ENCODE measurements at regions of chr16 and their contacts with region 1.

Region 1: GRCh38 chr16:19521471-19522396 is at the start of gene GDE1:
- DNase-seq: peak; percentile 96 to 97
- H3K4me3 ChIP-seq: peak within 1 kb of the TSS; percentile 52 to 92 (median 92)
- H3K27ac ChIP-seq: peak within 1 kb of the TSS; percentile 64 to 82 (median 80)
- H3K4me1 ChIP-seq: peaks cover 30 to 36% of the 10 kb centered on the region in 2 donors
- H3K27me3 ChIP-seq: no peaks in the 10 kb centered on the region
- CTCF ChIP-seq: peak in 3 of 6 experiments; percentile 29 to 31 (median 30)
- POLR2A ChIP-seq: peak in 1 of 2 donors; percentile 96
- total RNA-seq, gene GDE1: 57.3 to 80.9 (median 68.8) TPM

Region 2: DNA sequence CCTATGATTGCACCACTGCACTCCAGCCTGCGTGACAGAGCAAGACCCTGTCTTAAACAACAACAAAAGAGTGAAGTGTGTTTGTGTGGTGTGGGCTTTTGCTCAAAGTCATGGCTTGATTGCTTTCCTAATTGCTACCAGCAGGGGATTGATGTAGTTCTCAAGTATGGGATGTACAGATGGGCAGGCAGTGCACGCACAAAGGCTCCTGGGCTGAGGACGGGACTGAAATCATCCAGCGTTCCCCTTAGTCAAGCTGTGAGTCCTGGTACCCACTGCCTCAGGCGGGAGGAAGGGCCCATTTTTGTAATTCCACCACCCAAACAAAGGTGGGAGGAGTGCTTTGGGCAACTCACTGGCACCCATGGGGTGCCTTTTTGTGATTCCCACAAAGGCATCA is 47.1 kb before region 1 on chr16:
- intact Hi-C with region 1: no loop called
- DNase-seq: no peak
- H3K4me3 ChIP-seq: no peak overlapping the region
- H3K27ac ChIP-seq: no peak overlapping the region
- H3K4me1 ChIP-seq: peaks cover 0 to 5% of the 10 kb centered on the region in 2 donors
- H3K27me3 ChIP-seq: no peaks in the 10 kb centered on the region
- CTCF ChIP-seq: no peak
- POLR2A ChIP-seq: no peak

Region 3: DNA sequence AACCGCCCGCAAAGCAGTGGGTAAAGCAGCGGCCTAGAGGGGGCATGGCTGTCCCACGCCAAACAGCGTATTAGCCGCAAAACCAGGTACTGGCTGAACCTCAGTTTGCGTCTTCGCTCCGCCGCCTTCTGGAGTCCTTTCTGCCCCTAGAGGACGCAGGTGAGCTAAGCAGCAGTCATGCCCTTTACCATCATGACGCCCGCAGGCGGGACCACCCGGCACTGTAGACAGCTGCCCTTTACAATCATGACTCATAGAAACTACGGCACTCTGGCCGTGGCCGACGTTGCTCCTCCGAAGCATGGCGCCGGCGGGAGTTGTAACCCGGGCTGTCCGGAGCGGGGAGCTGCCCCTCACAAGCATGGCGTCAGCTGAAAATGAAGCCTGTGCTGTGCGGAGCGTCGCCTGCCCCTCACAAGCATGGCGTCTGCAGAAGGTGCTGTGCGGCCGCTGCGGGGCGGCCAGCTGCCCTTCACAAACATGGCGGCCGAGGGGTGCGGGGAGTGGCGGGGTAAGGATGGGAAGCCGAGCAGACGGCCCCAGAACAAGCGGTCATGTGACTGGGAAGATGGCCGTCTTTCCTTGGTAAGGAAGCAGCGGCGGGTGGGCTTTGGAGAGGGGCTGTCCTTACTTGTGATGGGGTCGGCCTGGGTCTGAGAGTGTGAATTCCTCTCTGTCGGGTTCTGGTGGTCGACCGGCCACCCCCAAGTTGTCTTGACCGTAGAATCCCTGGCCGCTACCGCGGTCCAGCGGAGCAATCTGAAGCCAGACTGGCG is 33.6 kb after region 1 on chr16 and contains the start of gene VPS35L:
- intact Hi-C with region 1: loop called (anchors 5 kb)
- DNase-seq: peak; percentile 97 to 98
- H3K4me3 ChIP-seq: peak within 1 kb of the TSS; percentile 35 to 66 (median 63)
- H3K27ac ChIP-seq: peak within 1 kb of the TSS; percentile 85 to 92 (median 91)
- H3K4me1 ChIP-seq: peaks cover 0 to 11% of the 10 kb centered on the region in 2 donors
- H3K27me3 ChIP-seq: no peaks in the 10 kb centered on the region
- CTCF ChIP-seq: peak; percentile 20 to 77 (median 72)
- POLR2A ChIP-seq: peak in 1 of 2 donors; percentile 58
- total RNA-seq, gene VPS35L: 64.9 to 74.3 (median 68.8) TPM

Region 4: DNA sequence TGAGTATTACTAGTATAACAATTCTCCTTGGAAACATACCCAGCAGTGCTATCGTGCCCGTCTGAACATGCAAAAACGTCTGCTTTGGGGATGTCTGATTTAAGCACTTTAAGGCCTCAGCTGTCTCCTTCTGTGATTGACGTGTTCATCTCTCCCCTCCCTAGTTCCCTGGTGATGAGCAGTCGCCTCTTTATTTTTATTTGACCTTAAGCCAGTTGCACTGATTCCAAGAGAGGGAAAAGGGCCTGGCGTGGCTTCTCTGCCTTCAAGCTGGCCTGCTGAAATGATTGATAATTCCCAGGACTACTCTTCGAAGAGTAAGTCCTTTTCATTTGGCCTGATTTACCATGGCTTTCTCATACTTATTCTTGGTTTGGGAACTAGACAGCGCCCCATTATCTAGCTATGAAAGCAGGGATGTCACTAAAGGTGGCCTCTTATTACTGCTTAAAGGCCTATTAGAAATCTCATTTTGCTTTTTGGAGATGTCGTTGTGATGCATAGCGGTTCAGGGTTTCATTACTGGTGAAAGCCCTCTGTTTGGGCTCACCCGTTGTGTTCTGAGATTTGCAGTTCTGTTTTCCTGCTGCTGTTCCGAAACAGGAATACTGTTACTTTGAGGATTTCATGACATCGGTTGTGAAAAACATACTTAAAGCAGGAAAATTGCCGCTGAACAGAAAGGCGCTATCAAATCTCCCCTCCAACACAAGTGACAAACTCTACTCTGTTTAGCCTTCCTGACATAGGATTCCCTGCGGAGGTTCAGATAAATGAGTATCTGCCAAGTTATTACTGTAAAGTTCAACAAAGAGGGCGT is 261.8 kb after region 1 on chr16:
- intact Hi-C with region 1: no loop called
- DNase-seq: no peak
- H3K4me3 ChIP-seq: no peak overlapping the region
- H3K27ac ChIP-seq: peak overlapping the region in 1 of 3 donors; percentile 33
- H3K4me1 ChIP-seq: peaks cover 0 to 22% of the 10 kb centered on the region in 2 donors
- H3K27me3 ChIP-seq: no peaks in the 10 kb centered on the region
- CTCF ChIP-seq: no peak
- POLR2A ChIP-seq: no peak